Dendritic cell treated with granulocyte-macrophage colony-stimulating factor and Interleukin-4, amounts not matched to agents 40 ng/mL and 50 ng/mL, for 4 days (primary cell): ENCODE measurements at regions of chr2 and their contacts with region 1.

Region 1: GRCh38 chr2:81250270-81250669 is 945.7 kb upstream of the LRRTM1 start:
- H3K4me3 Mint-ChIP-seq: no peak overlapping the region
- H3K27ac Mint-ChIP-seq: no peak overlapping the region
- H3K4me1 Mint-ChIP-seq: no peaks in the 10 kb centered on the region
- H3K27me3 Mint-ChIP-seq: no peaks in the 10 kb centered on the region

Region 2: DNA sequence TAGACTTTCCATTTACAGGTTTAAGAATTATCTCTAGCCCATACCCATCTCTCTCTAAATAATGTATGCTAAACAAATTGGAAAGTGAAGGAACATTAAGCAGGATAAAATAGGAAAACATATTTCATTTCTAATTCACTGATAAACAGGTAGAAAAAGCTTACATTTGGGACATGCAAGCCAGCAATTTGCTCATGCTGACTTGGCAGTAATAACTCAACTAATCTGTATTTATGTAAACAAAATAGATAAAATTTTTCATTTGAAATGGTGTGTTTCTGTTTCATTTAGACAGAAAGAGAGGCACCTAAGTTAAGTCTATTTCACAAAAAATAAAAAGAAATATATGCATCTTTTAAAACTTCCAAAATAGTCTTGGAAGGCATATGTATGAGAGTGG is 68.4 kb before region 1 on chr2:
- intact Hi-C with region 1: no loop called
- H3K4me3 Mint-ChIP-seq: no peak overlapping the region
- H3K27ac Mint-ChIP-seq: no peak overlapping the region
- H3K4me1 Mint-ChIP-seq: no peaks in the 10 kb centered on the region
- H3K27me3 Mint-ChIP-seq: no peaks in the 10 kb centered on the region

Region 3: DNA sequence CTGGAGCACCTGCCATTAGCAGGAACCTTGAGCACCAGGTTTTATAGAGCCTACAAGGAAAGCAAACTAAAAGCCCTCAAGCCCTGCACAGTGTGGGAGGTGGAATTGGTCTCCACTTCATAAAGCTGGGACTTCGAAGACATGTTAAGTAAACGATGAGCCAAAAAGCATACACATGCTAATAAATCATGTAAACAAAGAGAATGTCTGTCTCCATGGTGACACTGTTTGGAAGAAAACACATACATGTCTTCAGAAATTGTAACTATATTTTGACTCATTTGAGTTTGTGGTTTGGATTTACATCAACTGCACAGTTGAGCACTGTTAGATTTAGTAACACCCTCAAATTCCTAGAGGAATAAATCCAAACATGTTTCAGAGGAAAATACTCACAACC is 32.8 kb after region 1 on chr2:
- intact Hi-C with region 1: loop called (anchors 2 kb)
- H3K4me3 Mint-ChIP-seq: no peak overlapping the region
- H3K27ac Mint-ChIP-seq: no peak overlapping the region
- H3K4me1 Mint-ChIP-seq: no peaks in the 10 kb centered on the region
- H3K27me3 Mint-ChIP-seq: no peaks in the 10 kb centered on the region